B cell (primary cell): ENCODE measurements at regions of chr2 and their contacts with region 1.

Region 1: DNA sequence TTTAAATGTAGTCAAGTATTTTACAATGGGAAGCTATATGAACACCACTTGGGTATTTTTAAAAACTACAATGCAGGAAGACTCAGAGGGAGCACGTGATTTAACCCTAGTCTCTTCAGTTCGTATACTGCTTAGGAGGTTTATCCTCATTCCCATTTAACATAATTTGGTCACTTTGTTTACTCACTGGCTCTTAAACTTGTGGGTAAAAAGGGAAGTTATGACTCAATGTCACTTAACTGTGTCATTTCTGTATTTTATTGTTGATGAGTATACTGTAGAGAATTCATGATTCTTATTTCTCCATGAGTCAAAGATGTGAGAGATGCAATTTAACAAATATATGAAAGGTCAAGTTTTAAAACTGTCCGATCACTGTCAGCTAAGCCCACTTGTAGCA is 48.2 kb downstream of the SLC66A3 start:
- DNase-seq: no peak
- ATAC-seq: no peak
- H3K4me3 ChIP-seq: no peak overlapping the region
- H3K4me3 Mint-ChIP-seq: no peak overlapping the region
- H3K27ac ChIP-seq: no peak overlapping the region
- H3K27ac Mint-ChIP-seq: no peak overlapping the region
- H3K4me1 ChIP-seq: no peaks in the 10 kb centered on the region
- H3K4me1 Mint-ChIP-seq: peaks cover 6% of the 10 kb centered on the region
- H3K27me3 ChIP-seq: no peaks in the 10 kb centered on the region
- H3K27me3 Mint-ChIP-seq: no peaks in the 10 kb centered on the region
- CTCF ChIP-seq: no peak

Region 2: GRCh38 chr2:10634495-10634894 is 569.0 kb before region 1 on chr2:
- CTCF ChIA-PET with region 1: no interaction called
- POLR2A ChIA-PET with region 1: interaction called, 13 read pairs
- intact Hi-C with region 1: no loop called
- DNase-seq: no peak
- ATAC-seq: no peak
- H3K4me3 ChIP-seq: no peak overlapping the region
- H3K4me3 Mint-ChIP-seq: no peak overlapping the region
- H3K27ac ChIP-seq: no peak overlapping the region
- H3K27ac Mint-ChIP-seq: no peak overlapping the region
- H3K4me1 ChIP-seq: no peaks in the 10 kb centered on the region
- H3K4me1 Mint-ChIP-seq: no peaks in the 10 kb centered on the region
- H3K27me3 ChIP-seq: no peaks in the 10 kb centered on the region
- H3K27me3 Mint-ChIP-seq: no peaks in the 10 kb centered on the region
- CTCF ChIP-seq: no peak

Region 3: DNA sequence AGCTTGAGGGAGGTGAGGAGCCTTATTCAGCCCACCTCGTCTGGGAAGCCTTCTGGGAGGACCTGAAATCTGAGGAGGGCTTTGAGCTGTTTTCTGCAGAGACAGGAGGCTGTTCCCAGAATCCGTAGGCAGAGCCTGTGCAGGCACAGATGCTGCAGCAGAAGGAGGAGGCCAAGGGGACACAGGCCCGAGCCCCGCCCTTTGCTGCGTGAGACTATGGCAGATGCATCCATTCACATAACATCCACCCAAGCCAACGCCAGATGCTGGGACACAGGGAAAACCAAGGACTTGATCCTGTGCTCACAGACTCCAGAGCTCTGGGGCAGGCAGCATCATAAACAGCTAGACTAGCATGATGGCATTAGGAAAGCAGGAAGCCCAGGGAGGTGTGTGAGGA is 193.6 kb before region 1 on chr2:
- CTCF ChIA-PET with region 1: no interaction called
- POLR2A ChIA-PET with region 1: no interaction called
- intact Hi-C with region 1: no loop called
- DNase-seq: no peak
- ATAC-seq: no peak
- H3K4me3 ChIP-seq: no peak overlapping the region
- H3K4me3 Mint-ChIP-seq: no peak overlapping the region
- H3K27ac ChIP-seq: no peak overlapping the region
- H3K27ac Mint-ChIP-seq: no peak overlapping the region
- H3K4me1 ChIP-seq: no peaks in the 10 kb centered on the region
- H3K4me1 Mint-ChIP-seq: no peaks in the 10 kb centered on the region
- H3K27me3 ChIP-seq: no peaks in the 10 kb centered on the region
- H3K27me3 Mint-ChIP-seq: peaks cover 15% of the 10 kb centered on the region
- CTCF ChIP-seq: no peak

Region 4: DNA sequence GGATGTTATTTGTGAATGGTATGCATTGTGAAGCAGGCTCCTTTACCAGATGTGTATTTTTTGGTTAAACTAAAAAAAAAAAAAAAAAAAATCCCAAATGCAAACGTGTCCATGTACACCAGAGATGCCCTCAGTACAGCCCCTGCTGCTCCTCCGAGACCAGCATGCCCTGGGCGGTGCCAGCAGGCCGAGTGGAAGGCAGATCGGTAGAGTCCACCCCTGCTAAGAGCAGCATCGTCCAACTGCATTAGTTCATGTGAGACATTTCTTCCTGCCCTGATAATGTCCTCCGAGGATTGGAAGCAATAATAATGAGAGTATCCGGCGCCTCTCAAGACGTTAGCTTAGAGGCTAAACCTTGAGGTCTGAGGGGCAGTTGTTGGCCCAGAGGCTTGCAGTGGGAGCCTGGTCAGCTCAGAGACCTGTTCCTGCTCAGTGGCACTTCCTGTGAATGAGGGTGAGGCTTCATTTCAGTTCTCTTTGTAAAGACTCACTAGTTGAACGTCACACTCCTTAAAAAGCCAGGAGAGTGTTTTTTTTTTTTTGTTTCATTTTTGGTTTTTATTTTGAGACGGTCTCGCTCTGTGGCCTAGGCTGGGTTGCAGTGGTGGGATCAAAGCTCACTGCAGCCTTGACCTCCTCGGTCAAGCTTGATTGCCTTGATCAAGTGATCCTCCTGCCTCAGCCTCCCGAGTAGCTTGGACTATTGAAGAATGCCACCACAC is 42.6 kb before region 1 on chr2:
- CTCF ChIA-PET with region 1: no interaction called
- POLR2A ChIA-PET with region 1: no interaction called
- intact Hi-C with region 1: loop called (anchors 5 kb)
- DNase-seq: peak; percentile 25
- ATAC-seq: peak; percentile 61
- H3K4me3 ChIP-seq: no peak overlapping the region
- H3K4me3 Mint-ChIP-seq: no peak overlapping the region
- H3K27ac ChIP-seq: peak overlapping the region; percentile 53
- H3K27ac Mint-ChIP-seq: peak overlapping the region; percentile 83
- H3K4me1 ChIP-seq: peaks cover 13 to 22% of the 10 kb centered on the region in 2 donors
- H3K4me1 Mint-ChIP-seq: peaks cover 21% of the 10 kb centered on the region
- H3K27me3 ChIP-seq: no peaks in the 10 kb centered on the region
- H3K27me3 Mint-ChIP-seq: no peaks in the 10 kb centered on the region
- CTCF ChIP-seq: no peak

Region 5: GRCh38 chr2:11187083-11187619 is 16.3 kb before region 1 on chr2:
- CTCF ChIA-PET with region 1: no interaction called
- POLR2A ChIA-PET with region 1: no interaction called
- intact Hi-C with region 1: no loop called
- DNase-seq: no peak
- ATAC-seq: no peak
- H3K4me3 ChIP-seq: no peak overlapping the region
- H3K4me3 Mint-ChIP-seq: no peak overlapping the region
- H3K27ac ChIP-seq: no peak overlapping the region
- H3K27ac Mint-ChIP-seq: no peak overlapping the region
- H3K4me1 ChIP-seq: no peaks in the 10 kb centered on the region
- H3K4me1 Mint-ChIP-seq: no peaks in the 10 kb centered on the region
- H3K27me3 ChIP-seq: no peaks in the 10 kb centered on the region
- H3K27me3 Mint-ChIP-seq: no peaks in the 10 kb centered on the region
- CTCF ChIP-seq: no peak